SK-N-SH (cell line): ENCODE measurements at regions of chr1 and their contacts with region 1.

Region 1: GRCh38 chr1:179002552-179003345 is 22.9 kb upstream of the FAM20B start:
- DNase-seq: peak; percentile 79
- H3K4me3 ChIP-seq: peak overlapping the region in 1 of 2 experiments; percentile 39; a peak in 1 of 4 replicates
- H3K27ac ChIP-seq: no peak overlapping the region
- H3K4me1 ChIP-seq: peaks cover 0 to 2% of the 10 kb centered on the region in 2 experiments; a peak in 1 of 4 replicates
- H3K27me3 ChIP-seq: no peaks in the 10 kb centered on the region
- CTCF ChIP-seq: peak; percentile 96
- EP300 ChIP-seq: no peak
- RAD21 ChIP-seq: peak; percentile 95

Region 2: DNA sequence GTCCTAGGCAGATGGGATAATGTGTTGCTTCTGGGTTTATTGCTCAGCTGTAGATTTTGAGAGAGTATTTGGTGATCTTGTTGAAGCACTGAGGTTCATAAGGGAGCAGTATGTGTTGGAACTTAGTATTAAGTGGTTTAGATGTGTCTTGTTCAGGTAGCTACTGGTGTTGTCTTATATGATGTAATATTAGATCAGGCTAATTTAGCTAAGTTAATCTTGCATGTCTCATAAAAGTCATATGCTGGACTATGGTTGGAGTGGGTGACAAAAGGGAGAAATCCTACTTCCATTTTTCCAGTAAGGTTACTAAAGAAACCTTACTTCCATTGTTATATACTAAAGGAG is 702.4 kb before region 1 on chr1:
- CTCF ChIA-PET with region 1: interaction called, 15 read pairs
- POLR2A ChIA-PET with region 1: no interaction called
- DNase-seq: no peak
- H3K4me3 ChIP-seq: no peak overlapping the region; a peak in 1 of 4 replicates
- H3K27ac ChIP-seq: peak overlapping the region; percentile 15 to 80; a peak in 3 of 4 replicates
- H3K4me1 ChIP-seq: peaks cover 3 to 4% of the 10 kb centered on the region in 2 experiments; a peak in 2 of 4 replicates
- H3K27me3 ChIP-seq: no peaks in the 10 kb centered on the region
- CTCF ChIP-seq: no peak
- EP300 ChIP-seq: no peak
- RAD21 ChIP-seq: no peak

Region 3: GRCh38 chr1:178532392-178532791 is 470.4 kb before region 1 on chr1:
- CTCF ChIA-PET with region 1: interaction called, 128 read pairs
- POLR2A ChIA-PET with region 1: no interaction called
- DNase-seq: peak; percentile 84
- H3K4me3 ChIP-seq: peak overlapping the region in 1 of 2 experiments; percentile 18; a peak in 1 of 4 replicates
- H3K27ac ChIP-seq: no peak overlapping the region
- H3K4me1 ChIP-seq: peaks cover 20 to 21% of the 10 kb centered on the region in 2 experiments; a peak in 3 of 4 replicates
- H3K27me3 ChIP-seq: no peaks in the 10 kb centered on the region
- CTCF ChIP-seq: peak; percentile 95
- EP300 ChIP-seq: no peak
- RAD21 ChIP-seq: peak; percentile 85

Region 4: GRCh38 chr1:178749581-178750166 is 253.1 kb before region 1 on chr1:
- CTCF ChIA-PET with region 1: interaction called, 13 read pairs
- POLR2A ChIA-PET with region 1: no interaction called
- DNase-seq: no peak
- H3K4me3 ChIP-seq: no peak overlapping the region
- H3K27ac ChIP-seq: no peak overlapping the region
- H3K4me1 ChIP-seq: no peaks in the 10 kb centered on the region; a peak in 1 of 4 replicates
- H3K27me3 ChIP-seq: no peaks in the 10 kb centered on the region
- CTCF ChIP-seq: no peak
- EP300 ChIP-seq: no peak
- RAD21 ChIP-seq: no peak

Region 5: DNA sequence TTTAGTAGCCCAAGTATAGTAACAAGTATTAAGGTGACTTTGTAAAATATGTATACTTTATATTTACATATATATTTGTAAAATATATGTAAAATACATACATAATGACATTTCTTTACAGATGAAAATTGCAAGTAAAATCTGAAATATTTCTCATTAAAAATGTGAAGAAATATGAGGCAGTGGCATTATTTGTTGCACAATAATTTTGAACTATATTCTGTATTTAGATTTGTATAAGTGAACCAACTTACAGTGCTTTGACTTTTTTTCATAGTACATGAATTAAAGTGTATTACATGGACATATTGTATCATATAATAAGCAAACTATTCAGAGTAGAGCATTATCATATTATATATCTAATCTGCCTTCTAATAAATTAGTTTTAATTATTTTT is 192.2 kb before region 1 on chr1:
- CTCF ChIA-PET with region 1: interaction called, 22 read pairs
- POLR2A ChIA-PET with region 1: no interaction called
- DNase-seq: no peak
- H3K4me3 ChIP-seq: no peak overlapping the region
- H3K27ac ChIP-seq: no peak overlapping the region
- H3K4me1 ChIP-seq: no peaks in the 10 kb centered on the region; a peak in 1 of 4 replicates
- H3K27me3 ChIP-seq: no peaks in the 10 kb centered on the region
- CTCF ChIP-seq: no peak
- EP300 ChIP-seq: no peak
- RAD21 ChIP-seq: no peak

Region 6: GRCh38 chr1:179016747-179017549 is 14.2 kb after region 1 on chr1:
- CTCF ChIA-PET with region 1: interaction called, 21 read pairs
- POLR2A ChIA-PET with region 1: no interaction called
- DNase-seq: peak; percentile 55
- H3K4me3 ChIP-seq: no peak overlapping the region; a peak in 1 of 4 replicates
- H3K27ac ChIP-seq: peak overlapping the region; percentile 15 to 48; a peak in 3 of 4 replicates
- H3K4me1 ChIP-seq: peaks cover 8 to 16% of the 10 kb centered on the region in 2 experiments; a peak in 3 of 4 replicates
- H3K27me3 ChIP-seq: no peaks in the 10 kb centered on the region
- CTCF ChIP-seq: no peak
- EP300 ChIP-seq: no peak
- RAD21 ChIP-seq: no peak